Activated CD4-positive, alpha-beta T cell treated with anti-CD3 and anti-CD28 coated beads for 36 hours (primary cell): ENCODE measurements at regions of chr19 and their contacts with region 1.

Region 1: GRCh38 chr19:19138169-19138981 is at the start of gene TMEM161A:
- DNase-seq: peak; percentile 98
- ATAC-seq: peak; percentile 100
- H3K4me3 Mint-ChIP-seq: peak within 1 kb of the TSS; percentile 93
- H3K27ac Mint-ChIP-seq: peak within 1 kb of the TSS; percentile 95
- H3K4me1 Mint-ChIP-seq: peaks cover 30% of the 10 kb centered on the region
- H3K27me3 Mint-ChIP-seq: no peaks in the 10 kb centered on the region
- total RNA-seq, gene TMEM161A: 26.8 to 31.9 TPM

Region 2: GRCh38 chr19:18831524-18832305 is 306.7 kb before region 1 on chr19 and contains the start of gene UPF1:
- CTCF ChIA-PET with region 1: no interaction called
- POLR2A ChIA-PET with region 1: no interaction called
- intact Hi-C with region 1: loop called in 1 of 2 experiments (anchors 2 kb)
- DNase-seq: peak; percentile 98
- ATAC-seq: peak; percentile 82
- H3K4me3 Mint-ChIP-seq: peak within 1 kb of the TSS; percentile 96
- H3K27ac Mint-ChIP-seq: peak within 1 kb of the TSS; percentile 90
- H3K4me1 Mint-ChIP-seq: peaks cover 34% of the 10 kb centered on the region
- H3K27me3 Mint-ChIP-seq: peaks cover 3% of the 10 kb centered on the region
- total RNA-seq, gene UPF1: 72.4 to 74.0 TPM

Region 3: DNA sequence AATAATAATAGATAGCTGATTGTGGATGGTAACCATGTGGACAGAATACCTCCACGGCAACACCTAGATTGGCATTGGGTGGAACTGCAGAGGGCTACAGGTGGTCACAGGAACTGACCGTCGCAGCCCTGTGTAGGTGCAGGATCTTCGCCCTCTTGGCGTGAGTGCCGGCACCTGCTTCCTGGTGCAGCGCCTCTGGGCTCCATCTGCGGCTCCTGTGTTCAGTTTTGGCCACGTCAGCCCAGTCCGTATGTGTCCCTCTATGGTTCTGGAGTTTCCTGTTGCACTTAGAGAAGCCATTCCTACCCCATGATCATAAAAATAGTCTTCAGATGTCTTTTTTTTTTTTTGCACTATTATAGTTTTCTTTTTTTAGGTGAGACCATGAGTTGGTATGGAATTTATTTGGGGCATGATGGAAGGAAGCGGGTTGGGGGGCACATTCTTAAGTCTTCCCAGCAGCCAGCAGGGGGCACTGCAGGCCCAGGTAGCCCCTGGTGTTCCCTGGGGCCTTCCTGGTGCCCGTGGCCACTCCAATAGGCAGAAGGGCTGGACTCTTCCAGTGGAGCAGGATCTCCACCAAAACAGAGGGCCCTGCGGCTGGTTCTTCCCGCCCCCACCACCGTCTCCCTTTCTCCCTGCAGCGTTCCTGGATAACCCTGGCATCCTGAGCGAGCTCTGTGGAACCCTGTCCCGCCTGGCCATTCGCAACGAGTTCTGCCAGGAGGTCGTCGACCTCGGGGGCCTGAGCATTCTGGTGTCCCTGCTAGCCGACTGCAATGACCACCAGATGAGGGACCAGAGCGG is 84.7 kb before region 1 on chr19:
- CTCF ChIA-PET with region 1: interaction called, 6 read pairs
- POLR2A ChIA-PET with region 1: no interaction called
- intact Hi-C with region 1: loop called in 1 of 2 experiments (anchors 1 kb)
- DNase-seq: peak; percentile 77
- ATAC-seq: peak; percentile 69
- H3K4me3 Mint-ChIP-seq: no peak overlapping the region
- H3K27ac Mint-ChIP-seq: no peak overlapping the region
- H3K4me1 Mint-ChIP-seq: peaks cover 2% of the 10 kb centered on the region
- H3K27me3 Mint-ChIP-seq: no peaks in the 10 kb centered on the region

Region 4: DNA sequence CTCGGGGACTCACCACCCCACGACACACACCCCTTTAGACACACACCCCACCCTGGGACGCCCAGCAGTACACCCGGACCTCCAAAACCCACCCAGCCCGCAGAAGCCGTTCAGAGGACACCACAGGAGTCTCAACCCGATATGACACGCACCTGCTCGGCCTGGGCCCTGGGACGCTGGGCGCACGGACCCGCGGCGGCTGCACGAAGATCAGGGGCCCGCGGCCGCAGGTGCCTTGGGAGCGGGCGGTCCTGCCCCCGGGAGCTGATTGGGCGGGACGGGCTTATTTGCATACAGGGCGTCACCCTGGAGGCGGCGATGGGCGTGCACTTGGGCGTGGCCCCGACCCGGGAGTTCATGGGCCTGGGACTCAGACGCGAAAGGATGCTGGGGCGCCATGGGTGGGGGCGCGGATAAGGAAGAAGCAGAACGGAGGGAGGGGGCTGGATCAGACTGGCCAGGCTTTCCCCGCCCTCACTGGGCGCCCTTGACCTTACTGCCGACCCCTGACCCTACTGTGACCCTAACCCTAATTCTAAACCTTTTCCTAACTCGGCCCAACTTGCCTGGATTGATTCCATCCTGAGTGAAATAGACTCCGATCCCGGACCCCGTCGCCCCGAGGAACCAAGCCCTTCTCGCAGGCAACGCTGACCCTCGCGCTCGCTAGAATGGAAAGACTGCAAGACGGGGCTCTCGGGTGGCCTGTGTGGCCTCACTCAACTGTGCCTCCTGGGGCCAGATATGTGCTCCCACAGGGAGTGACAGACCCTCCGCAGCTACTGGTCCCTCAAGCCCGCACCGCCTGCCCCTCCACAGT is 31.9 kb after region 1 on chr19 and contains the start of gene MEF2B:
- CTCF ChIA-PET with region 1: interaction called, 8 read pairs
- POLR2A ChIA-PET with region 1: no interaction called
- intact Hi-C with region 1: loop called in 1 of 2 experiments (anchors 2 kb)
- DNase-seq: peak; percentile 90
- ATAC-seq: peak; percentile 93
- H3K4me3 Mint-ChIP-seq: no peak within 1 kb of the TSS
- H3K27ac Mint-ChIP-seq: no peak within 1 kb of the TSS
- H3K4me1 Mint-ChIP-seq: peaks cover 13% of the 10 kb centered on the region
- H3K27me3 Mint-ChIP-seq: no peaks in the 10 kb centered on the region
- total RNA-seq, gene MEF2B: 1.9 to 2.1 TPM

Region 5: GRCh38 chr19:19203012-19203856 is 64.9 kb after region 1 on chr19 and contains the start of gene NR2C2AP:
- CTCF ChIA-PET with region 1: no interaction called
- POLR2A ChIA-PET with region 1: no interaction called
- intact Hi-C with region 1: loop called in 1 of 2 experiments (anchors 1 kb)
- DNase-seq: peak; percentile 96
- ATAC-seq: peak; percentile 95
- H3K4me3 Mint-ChIP-seq: peak within 1 kb of the TSS; percentile 90
- H3K27ac Mint-ChIP-seq: peak within 1 kb of the TSS; percentile 84
- H3K4me1 Mint-ChIP-seq: peaks cover 30% of the 10 kb centered on the region
- H3K27me3 Mint-ChIP-seq: no peaks in the 10 kb centered on the region
- total RNA-seq, gene NR2C2AP: 34.7 to 46.6 TPM

Region 6: GRCh38 chr19:19224852-19225494 is 86.6 kb after region 1 on chr19:
- CTCF ChIA-PET with region 1: no interaction called
- POLR2A ChIA-PET with region 1: no interaction called
- intact Hi-C with region 1: loop called in 1 of 2 experiments (anchors 2 kb)
- DNase-seq: peak; percentile 87
- ATAC-seq: peak; percentile 90
- H3K4me3 Mint-ChIP-seq: peak overlapping the region; percentile 61
- H3K27ac Mint-ChIP-seq: no peak overlapping the region
- H3K4me1 Mint-ChIP-seq: no peaks in the 10 kb centered on the region
- H3K27me3 Mint-ChIP-seq: peaks cover 6% of the 10 kb centered on the region

Region 7: GRCh38 chr19:19320362-19321142 is 182.2 kb after region 1 on chr19 and contains the starts of genes MAU2 and SUGP1:
- CTCF ChIA-PET with region 1: no interaction called
- POLR2A ChIA-PET with region 1: no interaction called
- intact Hi-C with region 1: loop called in 1 of 2 experiments (anchors 1 kb)
- DNase-seq: peak; percentile 96
- ATAC-seq: peak; percentile 93
- H3K4me3 Mint-ChIP-seq: peak within 1 kb of the TSS; percentile 93
- H3K27ac Mint-ChIP-seq: peak within 1 kb of the TSS; percentile 100
- H3K4me1 Mint-ChIP-seq: peaks cover 39% of the 10 kb centered on the region
- H3K27me3 Mint-ChIP-seq: no peaks in the 10 kb centered on the region
- total RNA-seq, gene MAU2: 33.3 to 45.7 TPM
- total RNA-seq, gene SUGP1: 49.4 to 62.0 TPM